ENCODE measurements at regions of chr13 and their contacts with region 1.

Region 1: DNA sequence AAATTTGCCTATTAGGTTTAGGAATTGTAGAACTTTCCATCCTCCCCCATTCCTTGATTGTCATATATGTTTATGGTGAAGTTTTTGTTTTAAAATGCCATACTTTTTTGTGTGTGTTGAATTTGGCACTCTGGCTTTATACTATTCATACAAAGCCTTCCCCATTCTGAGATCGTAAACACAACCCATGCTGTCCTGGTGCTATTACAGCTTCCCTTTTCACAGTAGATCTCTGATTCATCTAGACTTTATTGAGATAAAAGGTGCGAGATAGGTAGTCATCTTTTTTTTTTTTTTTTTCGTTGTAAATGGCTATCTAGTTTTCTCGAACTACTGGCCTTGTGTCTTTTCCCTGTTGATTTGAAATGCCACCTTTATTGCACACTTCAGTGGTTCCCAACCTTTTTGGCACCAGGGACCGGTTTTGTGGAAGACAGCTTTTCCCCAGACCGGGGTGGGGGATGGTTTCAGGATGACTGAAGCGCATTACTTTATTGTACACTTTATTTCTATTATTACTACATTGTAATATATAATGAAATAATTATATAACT is 94.6 kb downstream of the LRCH1 start:
- DNase-seq: no peak
- H3K4me3 Mint-ChIP-seq: no peak overlapping the region
- H3K27ac Mint-ChIP-seq: no peak overlapping the region
- H3K4me1 Mint-ChIP-seq: peaks cover 26% of the 10 kb centered on the region
- H3K27me3 Mint-ChIP-seq: no peaks in the 10 kb centered on the region

Region 2: DNA sequence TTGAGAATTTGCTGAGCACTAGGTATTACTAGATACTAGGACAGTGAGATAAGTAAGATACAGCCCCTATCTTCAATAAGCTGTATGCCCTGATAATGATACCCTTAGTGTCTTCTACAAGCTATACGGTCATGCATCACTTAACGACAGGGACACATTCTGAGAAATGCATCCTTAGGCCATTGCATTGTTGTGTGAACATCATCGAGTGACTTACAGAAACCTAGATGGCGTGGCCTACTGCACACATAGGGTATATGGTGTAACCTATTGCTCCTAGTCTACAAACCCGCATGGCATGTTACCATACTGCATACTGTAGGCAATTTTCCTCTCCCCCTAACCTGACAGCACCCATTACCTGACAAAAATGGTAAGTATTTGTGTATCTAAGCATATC is 29.7 kb before region 1 on chr13:
- CTCF ChIA-PET with region 1: interaction called, 3 read pairs
- POLR2A ChIA-PET with region 1: interaction called, 11 read pairs
- DNase-seq: no peak
- H3K4me3 Mint-ChIP-seq: no peak overlapping the region
- H3K27ac Mint-ChIP-seq: no peak overlapping the region
- H3K4me1 Mint-ChIP-seq: peaks cover 33% of the 10 kb centered on the region
- H3K27me3 Mint-ChIP-seq: no peaks in the 10 kb centered on the region

Region 3: DNA sequence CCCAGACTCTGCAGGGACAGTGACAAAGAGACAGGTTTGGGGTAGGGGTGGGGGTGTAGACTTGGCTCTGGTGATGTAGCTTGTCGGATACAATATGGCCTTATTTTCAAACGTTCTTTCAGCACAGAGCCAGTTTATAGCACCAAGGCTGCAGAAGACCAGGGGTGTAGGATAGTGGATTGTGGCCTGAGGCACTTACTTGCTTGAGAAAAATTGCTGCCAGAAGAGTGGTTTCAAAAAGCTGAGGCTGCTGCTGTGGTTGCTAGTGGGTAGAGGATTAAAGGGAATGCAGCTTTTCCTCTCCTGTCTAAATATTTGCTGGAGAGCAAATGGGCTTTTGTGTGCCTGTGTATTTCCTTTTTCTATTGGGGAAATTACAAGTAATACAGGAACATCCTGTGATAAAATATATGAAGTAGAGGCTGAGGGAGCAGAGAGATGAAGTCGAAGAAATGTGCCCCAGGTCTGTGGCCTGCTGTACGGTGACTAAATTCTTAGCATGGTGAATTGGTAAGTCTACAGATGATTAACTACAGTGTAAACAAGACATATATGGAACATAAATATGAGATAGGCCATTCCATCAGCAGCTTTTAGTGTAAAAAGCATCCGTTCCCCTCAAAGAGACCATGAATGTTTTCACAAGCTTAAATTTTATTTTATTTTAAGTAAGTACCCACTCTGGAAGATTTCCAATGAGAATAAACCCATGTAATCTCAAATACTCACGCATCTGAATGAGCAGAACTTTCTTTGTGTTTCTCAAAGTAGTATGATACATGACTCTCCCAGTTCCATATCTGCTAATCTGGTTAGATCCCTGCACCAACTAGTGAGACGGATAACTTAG is 18.3 kb after region 1 on chr13:
- CTCF ChIA-PET with region 1: no interaction called
- POLR2A ChIA-PET with region 1: no interaction called
- DNase-seq: no peak
- H3K4me3 Mint-ChIP-seq: peak overlapping the region; percentile 1
- H3K27ac Mint-ChIP-seq: peak overlapping the region; percentile 77
- H3K4me1 Mint-ChIP-seq: peaks cover 59% of the 10 kb centered on the region
- H3K27me3 Mint-ChIP-seq: no peaks in the 10 kb centered on the region

Measured in activated CD4-positive, alpha-beta T cell treated with anti-CD3 and anti-CD28 coated beads, Interleukin-2, amount 10 ng/mL, durations not matched to agents 7 days and 5 days (primary cell).